ENCODE measurements at regions of chr1 and their contacts with region 1.

Region 1: DNA sequence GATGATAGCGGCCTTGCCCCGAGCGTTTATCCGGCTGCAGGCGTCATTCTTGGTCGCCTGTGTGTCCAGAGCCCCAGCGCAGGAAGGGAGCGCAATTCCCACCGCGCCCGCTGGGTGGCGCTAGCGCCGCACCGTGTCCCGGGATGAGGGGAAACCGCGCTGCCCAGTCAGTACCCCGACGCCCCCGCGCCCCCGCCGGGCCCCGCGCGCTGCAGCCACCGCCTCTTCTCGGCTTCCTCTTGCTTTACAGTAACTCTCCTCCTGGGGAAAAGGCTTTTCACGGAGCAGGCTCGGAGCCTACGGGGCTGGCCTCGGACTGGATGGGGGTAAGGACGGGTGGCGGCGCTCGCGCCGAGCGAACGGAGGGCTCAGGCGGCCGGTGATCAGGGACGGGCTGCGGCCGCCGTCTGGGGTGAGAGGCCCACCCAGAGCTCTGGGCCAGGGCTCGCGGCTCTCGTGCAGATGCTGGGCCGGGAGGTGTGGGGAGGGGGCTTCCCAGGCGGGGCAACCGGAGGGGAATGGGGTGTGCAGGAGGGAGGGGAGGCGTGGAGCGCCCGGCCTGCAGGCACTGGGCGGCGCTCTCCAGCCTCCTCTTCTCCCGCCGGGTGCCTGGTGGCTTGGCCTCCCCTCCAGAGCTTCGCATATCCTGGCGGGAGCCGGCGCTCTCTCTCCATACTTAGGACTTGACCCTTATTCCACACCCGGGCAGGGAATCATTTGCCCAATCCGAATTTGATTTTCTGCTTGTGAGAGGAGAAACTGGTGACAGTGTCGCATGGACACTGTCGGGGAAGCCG is 29.8 kb downstream of the TEX35 start:
- DNase-seq: peak; percentile 81 to 90 (median 85)
- H3K4me3 ChIP-seq: peak overlapping the region; percentile 75 to 98 (median 93)
- H3K27ac ChIP-seq: peak overlapping the region in 1 of 2 experiments; percentile 79
- H3K4me1 ChIP-seq: peaks cover 0 to 15% (median 12%) of the 10 kb centered on the region in 4 experiments
- H3K27me3 ChIP-seq: no peaks in the 10 kb centered on the region

Region 2: GRCh38 chr1:178465011-178465410 is 77.7 kb before region 1 on chr1:
- CTCF ChIA-PET with region 1: no interaction called
- POLR2A ChIA-PET with region 1: no interaction called
- DNase-seq: no peak
- H3K4me3 ChIP-seq: no peak overlapping the region
- H3K27ac ChIP-seq: no peak overlapping the region
- H3K4me1 ChIP-seq: no peaks in the 10 kb centered on the region
- H3K27me3 ChIP-seq: no peaks in the 10 kb centered on the region

Region 3: DNA sequence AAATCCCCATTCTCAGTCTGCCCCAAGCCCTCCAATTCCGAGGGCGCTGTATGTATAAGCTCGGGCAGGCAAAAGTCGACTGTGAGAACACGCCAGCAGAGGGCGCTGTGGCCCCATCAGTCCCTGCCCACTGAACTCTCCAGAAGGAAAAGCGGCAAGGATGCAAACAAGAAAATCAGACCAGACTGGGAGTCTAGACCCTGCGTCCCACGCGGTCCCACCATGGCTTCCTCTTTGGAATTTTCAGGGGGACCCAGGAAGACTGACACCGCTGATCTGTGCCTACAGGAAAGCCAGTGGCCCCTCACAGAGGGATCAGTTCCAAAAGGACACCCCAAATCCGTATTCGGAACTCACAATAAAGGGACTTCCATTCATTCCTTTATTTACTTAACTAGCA is 10.4 kb before region 1 on chr1:
- CTCF ChIA-PET with region 1: interaction called, 21 read pairs
- POLR2A ChIA-PET with region 1: no interaction called
- DNase-seq: peak; percentile 69 to 82 (median 74)
- H3K4me3 ChIP-seq: peak overlapping the region in 1 of 7 experiments; percentile 5
- H3K27ac ChIP-seq: no peak overlapping the region
- H3K4me1 ChIP-seq: peaks cover 0 to 7% (median 3%) of the 10 kb centered on the region in 4 experiments
- H3K27me3 ChIP-seq: no peaks in the 10 kb centered on the region

Region 4: DNA sequence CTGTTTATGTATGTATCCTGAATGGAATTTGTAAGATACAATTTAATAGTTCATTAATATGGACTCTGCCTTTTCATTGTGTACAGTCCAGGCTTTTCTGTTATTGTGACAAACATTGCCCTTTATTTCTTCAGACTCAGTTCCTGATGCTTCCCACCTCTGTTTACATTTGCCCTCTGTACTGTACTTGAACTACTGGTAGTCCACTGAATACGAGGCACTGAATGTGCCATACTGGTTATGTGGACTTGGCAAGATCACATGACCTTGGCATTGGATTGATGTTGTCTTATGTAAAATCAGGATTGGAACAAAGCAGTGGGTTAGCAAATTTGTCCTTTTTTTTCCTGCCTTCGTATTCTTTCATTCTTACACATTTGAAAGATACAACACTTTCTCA is 210.1 kb after region 1 on chr1:
- CTCF ChIA-PET with region 1: interaction called, 20 read pairs
- POLR2A ChIA-PET with region 1: interaction called, 3 read pairs
- DNase-seq: no peak
- H3K4me3 ChIP-seq: no peak overlapping the region
- H3K27ac ChIP-seq: no peak overlapping the region
- H3K4me1 ChIP-seq: no peaks in the 10 kb centered on the region
- H3K27me3 ChIP-seq: no peaks in the 10 kb centered on the region